Colonic mucosa (tissue), 4 donors: ENCODE measurements at regions of chr16 and their contacts with region 1.

Region 1: DNA sequence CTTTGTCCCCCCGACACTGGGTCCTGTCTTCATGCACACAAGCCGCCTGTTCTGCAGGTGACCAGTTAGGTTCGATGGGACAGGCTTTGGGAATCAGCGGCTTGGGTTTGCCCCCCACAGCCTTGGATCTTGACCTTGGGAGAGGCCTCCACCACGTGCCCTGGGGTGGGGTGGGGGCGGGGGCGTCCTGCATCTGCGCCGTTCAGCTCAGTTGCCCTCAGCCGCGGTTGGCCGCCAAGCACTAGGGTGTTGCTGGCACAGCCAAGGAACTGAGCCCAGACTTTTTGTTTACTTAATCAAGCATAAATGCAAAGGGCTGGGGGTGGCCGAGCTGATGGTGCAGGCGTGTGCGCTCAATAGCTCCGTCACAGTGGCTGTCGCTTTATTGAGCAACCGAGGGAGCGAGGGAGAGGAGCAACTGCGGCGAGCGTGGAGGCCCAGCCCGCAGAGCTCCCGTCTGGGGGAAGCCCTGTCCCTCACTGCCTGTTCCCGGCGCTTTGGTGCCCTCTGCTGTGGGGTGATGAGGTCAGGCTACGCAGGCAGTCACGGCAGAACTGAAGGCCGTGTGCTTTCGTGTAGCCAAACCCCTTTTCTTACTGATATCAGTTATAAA is 33.9 kb downstream of the JPH3 start:
- DNase-seq: peak; percentile 82
- H3K4me3 ChIP-seq: peak overlapping the region; percentile 22
- H3K27ac ChIP-seq: no peak overlapping the region
- H3K4me1 ChIP-seq: peaks cover 7% of the 10 kb centered on the region
- H3K27me3 ChIP-seq: no peaks in the 10 kb centered on the region
- CTCF ChIP-seq: peak; percentile 46

Region 2: DNA sequence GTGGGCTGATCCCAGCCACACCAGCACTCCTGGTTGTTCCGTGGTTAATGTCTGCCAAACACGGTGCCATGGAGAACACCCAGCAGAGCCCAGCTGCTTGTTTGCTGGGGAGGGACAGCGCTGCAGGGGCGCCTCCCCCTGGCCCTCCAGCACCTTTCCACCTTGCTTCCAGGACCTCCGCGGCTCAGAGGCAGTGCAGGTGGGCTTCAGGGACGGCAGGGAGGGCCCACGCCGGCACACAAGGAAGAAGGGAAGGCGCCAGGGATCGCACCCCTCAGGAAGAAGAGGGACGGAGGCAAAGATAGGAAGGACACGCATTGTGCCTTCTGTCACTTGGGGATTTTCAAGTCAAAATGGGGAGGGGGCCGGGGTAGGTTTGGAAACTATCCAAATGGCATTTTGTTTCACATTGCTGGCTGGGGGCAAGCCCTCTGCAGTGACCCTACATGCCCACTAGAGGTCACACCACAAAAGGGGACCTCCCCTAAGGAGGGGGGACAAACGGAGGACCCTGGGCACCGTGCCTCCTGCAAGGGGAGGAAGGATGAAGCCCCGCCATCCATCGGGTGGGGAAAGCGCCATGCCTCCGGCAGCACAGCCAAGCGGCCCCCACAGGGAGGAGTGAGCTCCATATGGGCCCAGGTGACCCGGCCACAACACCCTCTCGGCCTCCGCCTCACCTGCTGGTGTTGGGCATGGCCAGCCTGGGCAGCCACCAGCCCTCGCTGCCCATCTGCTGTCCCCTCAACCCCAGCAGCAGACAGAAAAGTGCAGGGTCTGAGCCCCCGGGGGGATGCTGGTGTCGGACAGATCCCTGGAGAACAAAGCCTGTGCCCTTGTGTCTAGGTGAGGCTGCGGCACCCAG is 311.5 kb before region 1 on chr16:
- intact Hi-C with region 1: loop called (anchors 10 kb)
- DNase-seq: no peak
- H3K4me3 ChIP-seq: no peak overlapping the region
- H3K27ac ChIP-seq: no peak overlapping the region
- H3K4me1 ChIP-seq: no peaks in the 10 kb centered on the region
- H3K27me3 ChIP-seq: no peaks in the 10 kb centered on the region
- CTCF ChIP-seq: peak; percentile 83

Region 3: GRCh38 chr16:87416826-87417527 is 219.2 kb before region 1 on chr16:
- intact Hi-C with region 1: loop called (anchors 5 kb)
- DNase-seq: peak; percentile 43
- H3K4me3 ChIP-seq: no peak overlapping the region
- H3K27ac ChIP-seq: no peak overlapping the region
- H3K4me1 ChIP-seq: no peaks in the 10 kb centered on the region
- H3K27me3 ChIP-seq: no peaks in the 10 kb centered on the region
- CTCF ChIP-seq: peak; percentile 64

Region 4: GRCh38 chr16:88497561-88498462 is 861.6 kb after region 1 on chr16:
- intact Hi-C with region 1: no loop called
- DNase-seq: no peak
- H3K4me3 ChIP-seq: no peak overlapping the region
- H3K27ac ChIP-seq: no peak overlapping the region
- H3K4me1 ChIP-seq: no peaks in the 10 kb centered on the region
- H3K27me3 ChIP-seq: no peaks in the 10 kb centered on the region
- CTCF ChIP-seq: no peak